ENCODE measurements at regions of chr11 and their contacts with region 1.

Region 1: GRCh38 chr11:68459886-68460740 is 439 bp upstream of the PPP6R3 start:
- DNase-seq: peak; percentile 99 to 100
- H3K4me3 ChIP-seq: peak overlapping the region; percentile 88
- H3K4me3 Mint-ChIP-seq: peak overlapping the region; percentile 96
- H3K27ac Mint-ChIP-seq: peak overlapping the region; percentile 99
- H3K4me1 ChIP-seq: peaks cover 17% of the 10 kb centered on the region
- H3K4me1 Mint-ChIP-seq: peaks cover 26% of the 10 kb centered on the region
- H3K27me3 ChIP-seq: no peaks in the 10 kb centered on the region
- H3K27me3 Mint-ChIP-seq: no peaks in the 10 kb centered on the region
- CTCF ChIP-seq: no peak

Region 2: DNA sequence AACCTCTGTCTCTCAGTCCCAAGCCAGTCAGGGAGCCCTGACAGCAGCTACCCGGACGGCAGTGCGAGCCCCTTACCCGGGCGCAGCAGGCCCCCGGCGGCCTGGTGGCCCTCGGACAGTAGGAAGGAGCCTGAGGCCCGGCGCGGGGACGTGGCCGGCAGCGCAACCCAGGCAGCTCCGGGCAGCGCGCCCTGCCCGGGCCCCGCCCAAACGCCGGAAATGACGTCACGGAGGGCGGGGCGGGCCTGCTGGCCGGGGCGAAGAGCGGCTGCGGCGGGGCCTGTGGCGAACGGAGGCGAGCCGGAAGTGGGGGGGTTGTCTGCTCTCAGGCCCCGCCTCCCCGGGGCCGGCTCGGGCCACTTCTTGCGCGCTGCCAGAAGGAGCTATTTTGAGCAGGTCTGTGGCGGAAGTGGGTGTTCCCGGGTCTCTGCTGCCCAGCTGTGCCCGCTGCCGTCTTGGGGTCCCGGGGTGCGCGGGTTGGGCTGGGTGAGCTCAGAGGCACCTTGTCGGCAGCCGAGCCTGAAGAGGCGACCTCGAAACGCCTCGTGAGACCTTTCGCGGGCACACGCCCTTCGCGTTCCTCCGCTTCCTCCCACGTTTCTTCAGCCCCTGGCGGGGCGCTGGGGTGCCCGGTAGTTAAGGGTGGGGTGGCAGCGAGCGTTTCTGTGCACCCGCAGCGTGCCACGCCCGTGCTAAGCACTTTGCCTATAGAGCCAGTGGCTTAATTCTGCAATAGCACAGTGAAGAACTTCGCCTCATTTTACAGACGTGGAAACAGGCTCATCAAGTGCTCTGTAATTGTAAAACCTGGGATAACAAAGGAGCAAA is 188.1 kb before region 1 on chr11 and contains the start of gene C11orf24:
- CTCF ChIA-PET with region 1: interaction called, 4 read pairs
- POLR2A ChIA-PET with region 1: interaction called, 13 read pairs
- intact Hi-C with region 1: no loop called
- DNase-seq: peak; percentile 97 to 100
- H3K4me3 ChIP-seq: peak within 1 kb of the TSS; percentile 93
- H3K4me3 Mint-ChIP-seq: peak within 1 kb of the TSS; percentile 100
- H3K27ac Mint-ChIP-seq: peak within 1 kb of the TSS; percentile 98
- H3K4me1 ChIP-seq: peaks cover 33% of the 10 kb centered on the region
- H3K4me1 Mint-ChIP-seq: peaks cover 28% of the 10 kb centered on the region
- H3K27me3 ChIP-seq: no peaks in the 10 kb centered on the region
- H3K27me3 Mint-ChIP-seq: no peaks in the 10 kb centered on the region
- CTCF ChIP-seq: peak in 1 of 2 experiments; percentile 10
- total RNA-seq, gene C11orf24: 79.8 and 83.2 TPM in 2 replicates

Region 3: GRCh38 chr11:68342459-68343158 is 117.5 kb before region 1 on chr11:
- CTCF ChIA-PET with region 1: no interaction called
- POLR2A ChIA-PET with region 1: interaction called, 11 read pairs
- intact Hi-C with region 1: no loop called
- DNase-seq: peak; percentile 95
- H3K4me3 ChIP-seq: no peak overlapping the region
- H3K4me3 Mint-ChIP-seq: peak overlapping the region; percentile 43
- H3K27ac Mint-ChIP-seq: peak overlapping the region; percentile 90
- H3K4me1 ChIP-seq: peaks cover 66% of the 10 kb centered on the region
- H3K4me1 Mint-ChIP-seq: peaks cover 67% of the 10 kb centered on the region
- H3K27me3 ChIP-seq: no peaks in the 10 kb centered on the region
- H3K27me3 Mint-ChIP-seq: no peaks in the 10 kb centered on the region
- CTCF ChIP-seq: no peak

Region 4: DNA sequence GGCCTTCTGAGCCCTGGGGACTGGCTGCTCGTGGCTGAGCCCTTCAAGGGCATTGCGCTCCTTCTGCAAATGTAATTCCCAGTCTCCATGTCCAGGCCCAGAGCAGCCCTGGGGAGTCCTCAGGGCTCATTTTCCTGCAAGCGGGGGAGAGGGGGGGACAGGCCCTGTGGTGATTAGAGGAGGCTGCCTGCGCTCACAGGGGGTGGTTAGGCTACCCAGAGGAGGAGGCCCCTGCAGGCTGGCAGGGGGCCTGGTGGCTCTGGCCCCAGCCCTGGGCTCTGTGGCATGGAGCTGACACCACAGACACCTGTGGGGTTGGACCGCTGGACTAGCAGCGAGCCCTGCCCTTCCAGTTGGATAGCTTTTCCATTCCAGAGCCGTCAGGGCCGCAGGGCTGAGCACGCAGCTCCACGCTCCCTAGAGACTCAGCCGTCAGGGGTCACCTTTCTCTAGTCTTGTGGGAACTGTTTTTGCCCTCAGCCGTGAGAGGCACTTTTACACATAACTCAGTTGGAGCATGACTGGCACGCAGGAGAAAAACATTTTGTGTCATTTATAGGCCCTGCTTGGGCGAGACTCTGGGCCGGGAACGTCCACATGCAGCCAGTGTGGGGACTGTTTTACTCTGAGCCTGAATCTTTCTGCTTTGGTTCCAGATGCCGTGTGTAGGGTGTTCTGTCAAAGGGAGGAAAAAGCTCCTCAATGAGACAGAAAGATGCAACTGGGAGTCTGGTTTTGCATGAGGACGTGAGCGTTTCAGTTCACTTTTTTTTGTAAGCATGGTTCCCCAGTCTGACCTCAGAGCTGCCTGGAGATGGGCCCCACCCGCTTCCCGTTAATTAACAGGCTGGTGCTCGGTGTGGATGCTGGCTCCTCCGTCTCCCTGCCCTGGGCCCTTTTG is 89.7 kb before region 1 on chr11:
- CTCF ChIA-PET with region 1: no interaction called
- POLR2A ChIA-PET with region 1: no interaction called
- intact Hi-C with region 1: no loop called
- DNase-seq: no peak
- H3K4me3 ChIP-seq: no peak overlapping the region
- H3K4me3 Mint-ChIP-seq: no peak overlapping the region
- H3K27ac Mint-ChIP-seq: no peak overlapping the region
- H3K4me1 ChIP-seq: peaks cover 27% of the 10 kb centered on the region
- H3K4me1 Mint-ChIP-seq: peaks cover 44% of the 10 kb centered on the region
- H3K27me3 ChIP-seq: no peaks in the 10 kb centered on the region
- H3K27me3 Mint-ChIP-seq: no peaks in the 10 kb centered on the region
- CTCF ChIP-seq: no peak

Region 5: DNA sequence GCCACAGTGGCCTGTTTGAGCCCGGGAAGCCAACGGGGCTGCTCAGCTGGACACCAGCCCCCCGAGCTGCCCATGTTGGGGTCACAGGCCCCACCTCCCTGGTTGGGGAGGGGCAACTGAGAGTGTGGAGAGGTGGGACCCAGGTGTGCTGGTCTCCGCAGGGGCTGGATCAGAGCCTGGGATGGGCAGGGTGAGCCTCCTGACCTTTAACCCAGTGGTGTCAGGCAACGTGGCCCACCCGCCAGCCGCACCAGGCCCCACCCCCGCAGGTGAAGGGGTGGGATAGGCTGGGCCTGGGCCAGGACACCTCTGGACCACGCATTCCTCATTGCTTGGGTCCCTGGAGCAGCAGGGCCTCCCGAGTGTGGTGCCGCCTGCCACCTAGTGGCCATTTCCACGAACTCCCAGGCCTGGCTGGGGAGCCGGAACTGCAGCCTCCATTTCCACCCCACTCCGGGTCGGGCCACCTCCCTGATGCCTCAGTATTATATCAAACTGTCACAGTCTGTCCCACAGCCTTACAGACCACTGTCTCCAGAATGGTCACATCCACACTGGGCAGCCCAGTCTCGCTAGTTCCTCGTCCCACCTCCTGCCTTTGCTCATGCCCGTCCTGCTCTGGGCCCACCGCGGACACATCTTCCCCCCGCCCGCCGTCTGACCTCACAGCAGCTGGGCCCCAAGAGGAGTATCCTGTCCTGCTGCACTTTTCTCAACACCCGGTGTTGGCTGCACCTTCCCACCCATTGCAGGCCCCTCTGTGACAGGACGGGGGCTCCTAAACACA is 12.9 kb before region 1 on chr11:
- CTCF ChIA-PET with region 1: no interaction called
- POLR2A ChIA-PET with region 1: no interaction called
- intact Hi-C with region 1: loop called (anchors 1 kb)
- DNase-seq: peak; percentile 87 to 92
- H3K4me3 ChIP-seq: no peak overlapping the region
- H3K4me3 Mint-ChIP-seq: no peak overlapping the region
- H3K27ac Mint-ChIP-seq: peak overlapping the region; percentile 65
- H3K4me1 ChIP-seq: no peaks in the 10 kb centered on the region
- H3K4me1 Mint-ChIP-seq: no peaks in the 10 kb centered on the region
- H3K27me3 ChIP-seq: no peaks in the 10 kb centered on the region
- H3K27me3 Mint-ChIP-seq: no peaks in the 10 kb centered on the region
- CTCF ChIP-seq: peak; percentile 98 to 99

Region 6: GRCh38 chr11:68532727-68533369 is 72.7 kb after region 1 on chr11:
- CTCF ChIA-PET with region 1: no interaction called
- POLR2A ChIA-PET with region 1: interaction called, 3 read pairs
- intact Hi-C with region 1: loop called (anchors 2 kb)
- DNase-seq: peak; percentile 64 to 67
- H3K4me3 ChIP-seq: no peak overlapping the region
- H3K4me3 Mint-ChIP-seq: peak overlapping the region; percentile 49
- H3K27ac Mint-ChIP-seq: peak overlapping the region; percentile 80
- H3K4me1 ChIP-seq: peaks cover 21% of the 10 kb centered on the region
- H3K4me1 Mint-ChIP-seq: peaks cover 26% of the 10 kb centered on the region
- H3K27me3 ChIP-seq: no peaks in the 10 kb centered on the region
- H3K27me3 Mint-ChIP-seq: no peaks in the 10 kb centered on the region
- CTCF ChIP-seq: no peak

Region 7: DNA sequence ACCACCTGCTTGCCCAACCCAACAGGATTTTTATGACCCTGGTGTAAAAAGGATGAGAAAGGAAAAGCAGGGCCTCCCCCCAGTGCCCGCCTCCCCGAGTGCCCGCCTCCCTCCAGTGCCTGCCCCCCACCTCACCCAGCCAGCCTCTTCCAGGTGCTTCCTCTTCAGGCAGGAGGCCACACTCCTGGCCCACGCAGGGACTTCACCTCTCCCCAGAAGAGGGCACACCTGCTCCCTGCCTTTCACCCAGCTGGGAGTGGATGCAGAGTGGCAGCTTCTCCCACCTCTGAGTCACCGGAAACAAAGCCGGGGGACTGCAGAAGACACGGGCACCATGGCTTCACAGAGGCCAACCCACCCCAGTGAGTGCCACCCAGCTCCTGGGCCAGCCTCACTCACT is 365.5 kb after region 1 on chr11:
- CTCF ChIA-PET with region 1: no interaction called
- POLR2A ChIA-PET with region 1: no interaction called
- intact Hi-C with region 1: no loop called
- DNase-seq: peak; percentile 68 to 74
- H3K4me3 ChIP-seq: no peak overlapping the region
- H3K4me3 Mint-ChIP-seq: no peak overlapping the region
- H3K27ac Mint-ChIP-seq: no peak overlapping the region
- H3K4me1 ChIP-seq: no peaks in the 10 kb centered on the region
- H3K4me1 Mint-ChIP-seq: no peaks in the 10 kb centered on the region
- H3K27me3 ChIP-seq: no peaks in the 10 kb centered on the region
- H3K27me3 Mint-ChIP-seq: no peaks in the 10 kb centered on the region
- CTCF ChIP-seq: peak; percentile 30 to 72